ENCODE measurements at regions of chr13 and their contacts with region 1.

Region 1: GRCh38 chr13:49976314-49977258 is 20.3 kb upstream of the TRIM13 start:
- DNase-seq: peak; percentile 53 to 88 (median 78)
- ATAC-seq: peak; percentile 89
- H3K4me3 ChIP-seq: no peak overlapping the region
- H3K4me3 Mint-ChIP-seq: no peak overlapping the region
- H3K27ac ChIP-seq: no peak overlapping the region
- H3K27ac Mint-ChIP-seq: no peak overlapping the region
- H3K4me1 ChIP-seq: no peaks in the 10 kb centered on the region
- H3K4me1 Mint-ChIP-seq: no peaks in the 10 kb centered on the region
- H3K27me3 ChIP-seq: no peaks in the 10 kb centered on the region
- H3K27me3 Mint-ChIP-seq: no peaks in the 10 kb centered on the region
- CTCF ChIP-seq: peak; percentile 70

Region 2: GRCh38 chr13:48998641-48999292 is 977.8 kb before region 1 on chr13:
- CTCF ChIA-PET with region 1: no interaction called
- POLR2A ChIA-PET with region 1: no interaction called
- intact Hi-C with region 1: no loop called
- DNase-seq: no peak
- ATAC-seq: no peak
- H3K4me3 ChIP-seq: no peak overlapping the region
- H3K4me3 Mint-ChIP-seq: no peak overlapping the region
- H3K27ac ChIP-seq: no peak overlapping the region
- H3K27ac Mint-ChIP-seq: no peak overlapping the region
- H3K4me1 ChIP-seq: no peaks in the 10 kb centered on the region
- H3K4me1 Mint-ChIP-seq: peaks cover 36% of the 10 kb centered on the region
- H3K27me3 ChIP-seq: no peaks in the 10 kb centered on the region
- H3K27me3 Mint-ChIP-seq: no peaks in the 10 kb centered on the region
- CTCF ChIP-seq: no peak

Region 3: DNA sequence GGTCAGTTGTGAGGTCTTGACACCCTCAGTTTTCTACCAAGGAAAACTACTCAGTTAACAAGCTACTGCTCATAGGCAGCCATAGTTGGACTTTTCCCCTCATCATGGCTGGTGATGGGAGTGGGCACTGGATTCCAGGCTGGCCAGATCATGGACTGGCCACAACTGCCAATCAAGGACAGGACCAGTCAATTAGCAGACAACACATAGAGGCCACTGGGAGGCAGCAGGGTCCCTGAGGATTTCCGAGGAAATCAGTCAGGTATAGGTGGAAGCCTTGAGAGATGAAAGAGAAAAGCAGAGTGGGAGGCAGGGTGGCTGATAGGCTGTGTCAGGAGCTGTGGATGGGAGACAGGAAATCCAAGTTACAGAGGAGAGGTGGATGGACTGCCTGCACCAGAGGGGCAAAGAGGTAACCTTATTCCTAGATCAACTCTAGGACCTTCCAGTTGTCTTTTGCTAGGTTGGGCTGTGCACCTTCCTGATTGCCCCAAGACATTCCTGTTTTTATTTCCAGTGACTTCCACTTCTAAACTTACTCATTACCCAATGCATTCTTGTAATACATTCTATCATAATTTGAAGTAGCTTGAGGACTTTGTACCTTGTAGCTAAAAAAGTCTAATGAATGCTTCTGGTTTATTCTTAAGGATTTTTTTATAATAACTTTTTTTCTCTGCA is 400.4 kb after region 1 on chr13:
- CTCF ChIA-PET with region 1: no interaction called
- POLR2A ChIA-PET with region 1: no interaction called
- intact Hi-C with region 1: loop called (anchors 5 to 10 kb)
- DNase-seq: no peak
- ATAC-seq: no peak
- H3K4me3 ChIP-seq: no peak overlapping the region
- H3K4me3 Mint-ChIP-seq: no peak overlapping the region
- H3K27ac ChIP-seq: no peak overlapping the region
- H3K27ac Mint-ChIP-seq: no peak overlapping the region
- H3K4me1 ChIP-seq: no peaks in the 10 kb centered on the region
- H3K4me1 Mint-ChIP-seq: peaks cover 2% of the 10 kb centered on the region
- H3K27me3 ChIP-seq: no peaks in the 10 kb centered on the region
- H3K27me3 Mint-ChIP-seq: peaks cover 11% of the 10 kb centered on the region
- CTCF ChIP-seq: no peak

Region 4: DNA sequence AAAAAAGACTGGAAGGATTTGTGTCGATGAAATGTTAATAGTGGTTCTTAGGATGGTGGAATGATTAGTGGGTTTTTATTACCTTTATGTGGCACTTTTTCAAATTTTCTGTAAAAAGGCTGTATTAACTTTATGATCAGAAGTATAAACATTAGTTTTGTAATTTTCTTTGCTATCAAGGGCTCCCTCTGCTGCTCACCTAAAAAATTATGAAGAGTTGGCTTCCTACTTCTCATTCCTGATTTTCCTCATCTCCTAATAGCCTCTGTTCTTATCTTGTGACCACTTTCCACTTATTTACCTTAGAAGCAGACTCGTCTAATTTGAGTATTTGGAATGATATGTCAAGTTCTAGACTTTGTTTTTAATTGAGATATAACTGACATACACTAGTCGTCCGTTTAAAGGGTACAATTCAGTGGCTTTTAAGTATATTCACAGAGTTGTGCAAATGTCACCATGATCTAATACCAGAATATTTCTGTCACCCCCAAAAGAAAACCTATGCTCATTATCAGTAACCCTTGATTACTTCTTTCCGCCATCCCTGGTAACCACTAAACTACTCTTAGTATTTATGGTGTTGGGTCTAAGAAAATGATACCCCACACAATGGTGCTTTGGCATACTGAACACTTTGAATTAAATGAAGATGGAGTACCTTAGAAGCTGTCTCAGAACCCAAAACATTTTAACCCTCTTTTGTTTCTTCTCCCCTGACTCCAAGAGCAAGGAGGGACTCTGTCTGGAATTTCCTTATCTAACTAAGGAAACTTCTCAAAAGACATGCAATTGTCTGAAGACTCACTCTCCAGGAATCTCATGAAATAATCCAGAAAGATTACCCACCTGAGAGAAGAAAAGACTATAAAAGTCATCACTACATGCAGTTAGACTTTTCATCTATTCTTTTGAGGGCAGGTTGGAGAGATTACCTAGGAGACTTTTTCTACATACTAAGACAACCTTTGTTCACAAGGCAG is 555.6 kb after region 1 on chr13:
- CTCF ChIA-PET with region 1: interaction called, 7 read pairs
- POLR2A ChIA-PET with region 1: no interaction called
- intact Hi-C with region 1: loop called (anchors 1 kb)
- DNase-seq: peak in 2 of 9 experiments; percentile 28 to 37
- ATAC-seq: no peak
- H3K4me3 ChIP-seq: no peak overlapping the region
- H3K4me3 Mint-ChIP-seq: no peak overlapping the region
- H3K27ac ChIP-seq: no peak overlapping the region
- H3K27ac Mint-ChIP-seq: no peak overlapping the region
- H3K4me1 ChIP-seq: no peaks in the 10 kb centered on the region
- H3K4me1 Mint-ChIP-seq: peaks cover 12% of the 10 kb centered on the region
- H3K27me3 ChIP-seq: no peaks in the 10 kb centered on the region
- H3K27me3 Mint-ChIP-seq: no peaks in the 10 kb centered on the region
- CTCF ChIP-seq: peak; percentile 29

Region 5: GRCh38 chr13:51070005-51070649 is 1093.5 kb after region 1 on chr13:
- CTCF ChIA-PET with region 1: interaction called, 21 read pairs
- POLR2A ChIA-PET with region 1: no interaction called
- intact Hi-C with region 1: loop called (anchors 1 kb)
- DNase-seq: peak; percentile 42 to 84 (median 76)
- ATAC-seq: peak; percentile 90
- H3K4me3 ChIP-seq: no peak overlapping the region
- H3K4me3 Mint-ChIP-seq: no peak overlapping the region
- H3K27ac ChIP-seq: no peak overlapping the region
- H3K27ac Mint-ChIP-seq: no peak overlapping the region
- H3K4me1 ChIP-seq: peaks cover 6% of the 10 kb centered on the region
- H3K4me1 Mint-ChIP-seq: peaks cover 7% of the 10 kb centered on the region
- H3K27me3 ChIP-seq: no peaks in the 10 kb centered on the region
- H3K27me3 Mint-ChIP-seq: peaks cover 20% of the 10 kb centered on the region
- CTCF ChIP-seq: peak; percentile 94

Measured in CD8-positive, alpha-beta T cell (primary cell).